Activated T-helper 2 cell treated with anti-CD3 and anti-CD28 coated beads, Interferon-gamma antibody, Interleukin-2, Interleukin-4, amounts not matched to agents 10 μg/mL and 5 μg/mL and 100 μg/mL, durations not matched to agents 14 hours and 24 hours and 36 hours (primary cell): ENCODE measurements at regions of chr1 and their contacts with region 1.

Region 1: GRCh38 chr1:12448746-12449177 is 169.2 kb downstream of the DHRS3 start:
- DNase-seq: no peak
- H3K4me3 Mint-ChIP-seq: peak overlapping the region; percentile 60
- H3K27ac Mint-ChIP-seq: peak overlapping the region; percentile 96
- H3K4me1 Mint-ChIP-seq: peaks cover 72% of the 10 kb centered on the region
- H3K27me3 Mint-ChIP-seq: peaks cover 2% of the 10 kb centered on the region

Region 2: DNA sequence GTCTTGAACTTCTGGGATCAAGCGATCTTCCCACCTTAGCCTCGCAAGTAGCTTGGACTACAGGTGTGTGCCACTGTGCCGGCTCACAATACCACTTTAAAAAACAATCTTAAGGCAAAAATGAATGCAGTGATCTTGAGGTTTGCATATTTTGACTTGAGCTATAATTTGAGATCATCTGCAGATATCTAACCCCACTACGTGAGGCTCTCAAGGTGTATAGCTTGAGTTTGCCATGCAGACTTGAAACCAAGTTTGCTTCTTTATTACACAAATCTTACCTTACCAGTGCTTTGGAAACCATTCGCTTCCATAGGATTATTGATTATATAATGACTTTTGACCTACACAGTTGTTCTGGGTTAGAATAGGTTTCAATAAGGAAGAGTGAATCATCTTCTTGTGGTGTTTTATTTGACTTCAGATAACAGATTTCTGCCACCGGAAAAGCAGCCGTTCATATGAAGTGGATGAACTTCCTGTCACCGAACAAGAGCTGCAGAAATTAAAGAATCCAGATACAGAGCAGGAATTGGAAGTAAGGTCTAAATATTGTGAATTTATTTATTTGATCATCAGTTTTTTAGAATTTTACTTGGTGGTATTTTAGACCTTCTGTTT is 63.8 kb before region 1 on chr1:
- intact Hi-C with region 1: loop called (anchors 1 kb)
- DNase-seq: peak; percentile 22
- H3K4me3 Mint-ChIP-seq: no peak overlapping the region
- H3K27ac Mint-ChIP-seq: peak overlapping the region; percentile 36
- H3K4me1 Mint-ChIP-seq: peaks cover 42% of the 10 kb centered on the region
- H3K27me3 Mint-ChIP-seq: no peaks in the 10 kb centered on the region

Region 3: DNA sequence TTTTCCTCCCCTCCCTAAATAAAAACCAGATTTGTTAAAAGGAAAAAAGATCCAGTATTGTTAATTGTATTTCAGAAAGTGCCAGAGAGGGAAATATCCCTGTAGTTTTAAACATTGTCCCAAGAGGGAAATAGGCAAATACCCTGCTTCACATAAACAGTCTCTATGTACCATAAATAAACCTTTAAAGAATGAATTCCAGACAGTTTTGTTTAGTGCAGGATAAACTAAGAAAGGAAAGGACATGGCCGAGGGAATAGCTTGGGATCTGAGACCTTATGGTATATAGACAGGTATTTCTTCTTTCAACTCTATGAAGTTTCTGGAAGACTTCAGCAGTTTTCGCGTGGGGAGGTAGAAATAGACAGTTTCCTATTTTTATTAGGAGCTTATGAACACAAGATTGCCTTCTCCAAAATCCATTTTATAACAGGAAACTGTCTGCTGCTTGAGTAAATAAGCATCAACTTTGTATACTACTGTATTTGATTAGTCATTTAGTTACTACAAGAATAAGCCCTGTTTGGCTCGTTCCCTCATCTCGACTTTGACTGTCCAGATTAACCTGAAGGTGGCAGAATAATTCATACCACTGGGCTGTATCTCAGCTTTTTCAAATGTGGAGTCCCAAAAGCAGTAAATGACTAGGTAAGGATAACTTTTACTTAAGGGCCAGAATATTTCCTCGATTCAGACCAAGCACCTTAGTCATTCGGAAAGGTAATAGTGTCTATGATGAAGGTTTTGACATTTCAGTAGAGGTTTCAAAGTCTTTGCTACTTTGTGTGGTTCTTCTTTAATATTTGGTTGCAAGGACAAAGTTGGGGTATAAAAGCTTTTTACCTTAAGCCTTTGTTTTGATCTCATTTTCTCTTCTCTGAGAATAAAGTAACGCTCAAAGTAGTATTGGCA is 41.5 kb before region 1 on chr1:
- intact Hi-C with region 1: loop called (anchors 5 kb)
- DNase-seq: no peak
- H3K4me3 Mint-ChIP-seq: no peak overlapping the region
- H3K27ac Mint-ChIP-seq: no peak overlapping the region
- H3K4me1 Mint-ChIP-seq: peaks cover 22% of the 10 kb centered on the region
- H3K27me3 Mint-ChIP-seq: no peaks in the 10 kb centered on the region

Region 4: DNA sequence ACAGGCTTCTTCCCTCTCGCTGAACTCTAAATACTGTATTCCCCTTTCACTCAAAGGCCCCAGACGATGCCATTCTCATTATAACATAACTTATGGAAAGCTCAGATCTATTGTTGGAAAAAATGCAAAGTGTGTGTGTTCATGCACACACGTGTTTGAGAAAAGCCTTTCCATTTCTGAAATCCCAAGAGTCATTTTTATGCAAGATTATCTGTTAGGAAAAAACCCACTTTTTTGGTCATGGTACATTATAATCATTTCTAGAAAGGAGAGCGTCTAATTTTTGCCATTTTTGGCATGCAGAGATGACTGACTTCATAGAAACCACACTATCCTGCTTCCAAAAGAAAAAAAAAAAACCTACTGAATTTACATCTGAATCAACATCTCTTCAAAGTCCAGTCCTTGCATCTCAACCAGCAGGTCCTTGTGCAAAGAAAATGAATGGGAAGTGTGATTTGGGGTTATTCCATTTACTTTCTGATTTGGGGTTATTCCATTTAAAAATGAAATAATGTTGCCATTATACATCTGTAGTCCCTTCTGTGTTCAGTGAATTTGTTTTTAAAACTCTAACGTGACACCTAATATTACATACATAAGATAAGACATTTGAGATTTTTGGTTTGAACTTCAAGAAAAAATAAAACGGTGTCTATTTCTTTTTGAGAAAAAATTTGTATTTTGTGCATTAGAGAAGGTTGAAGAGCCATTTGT is 19.0 kb after region 1 on chr1:
- intact Hi-C with region 1: loop called (anchors 1 kb)
- DNase-seq: no peak
- H3K4me3 Mint-ChIP-seq: peak overlapping the region; percentile 16
- H3K27ac Mint-ChIP-seq: peak overlapping the region; percentile 93
- H3K4me1 Mint-ChIP-seq: peaks cover 32% of the 10 kb centered on the region
- H3K27me3 Mint-ChIP-seq: no peaks in the 10 kb centered on the region

Region 5: DNA sequence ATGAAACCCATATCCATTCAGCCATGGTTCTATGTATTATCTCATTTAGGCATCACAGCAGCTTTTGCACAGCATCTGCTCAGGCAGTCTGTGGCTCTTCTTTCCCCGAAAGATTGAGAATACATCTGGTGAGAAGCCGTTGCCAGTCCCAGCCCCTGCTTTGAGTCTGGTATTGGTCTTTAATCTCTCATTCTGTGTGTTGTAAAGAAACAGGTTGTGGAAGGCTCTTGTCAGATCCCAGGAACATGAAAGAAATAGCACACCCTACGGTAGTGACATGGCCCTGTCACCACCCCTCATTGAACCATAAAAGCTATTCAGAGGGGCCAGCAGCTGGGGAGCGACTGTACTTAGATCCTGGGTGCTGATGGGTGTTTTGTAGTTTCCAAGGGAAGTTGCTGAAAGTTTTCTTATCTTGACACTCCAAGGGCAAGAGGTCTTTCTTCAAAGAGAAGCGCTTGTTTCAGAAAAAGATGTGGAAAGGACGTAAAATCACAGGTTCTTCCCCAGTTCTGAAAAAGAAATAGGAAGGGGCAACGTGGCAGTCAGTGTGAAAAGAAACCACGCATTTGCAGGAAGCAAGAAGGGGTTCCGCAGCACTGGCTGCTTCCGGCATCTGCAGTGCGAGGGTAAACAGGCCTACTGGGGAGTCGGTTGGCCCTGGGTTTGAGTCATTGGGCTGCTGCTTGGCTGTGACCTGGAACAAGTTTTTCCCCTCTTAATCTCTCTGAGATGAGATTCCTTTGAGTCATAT is 24.2 kb after region 1 on chr1:
- intact Hi-C with region 1: loop called (anchors 1 kb)
- DNase-seq: peak; percentile 60
- H3K4me3 Mint-ChIP-seq: peak overlapping the region; percentile 43
- H3K27ac Mint-ChIP-seq: peak overlapping the region; percentile 95
- H3K4me1 Mint-ChIP-seq: peaks cover 69% of the 10 kb centered on the region
- H3K27me3 Mint-ChIP-seq: no peaks in the 10 kb centered on the region